Common myeloid progenitor, CD34-positive (primary cell): ENCODE measurements at regions of chr14 and their contacts with region 1.

Region 1: DNA sequence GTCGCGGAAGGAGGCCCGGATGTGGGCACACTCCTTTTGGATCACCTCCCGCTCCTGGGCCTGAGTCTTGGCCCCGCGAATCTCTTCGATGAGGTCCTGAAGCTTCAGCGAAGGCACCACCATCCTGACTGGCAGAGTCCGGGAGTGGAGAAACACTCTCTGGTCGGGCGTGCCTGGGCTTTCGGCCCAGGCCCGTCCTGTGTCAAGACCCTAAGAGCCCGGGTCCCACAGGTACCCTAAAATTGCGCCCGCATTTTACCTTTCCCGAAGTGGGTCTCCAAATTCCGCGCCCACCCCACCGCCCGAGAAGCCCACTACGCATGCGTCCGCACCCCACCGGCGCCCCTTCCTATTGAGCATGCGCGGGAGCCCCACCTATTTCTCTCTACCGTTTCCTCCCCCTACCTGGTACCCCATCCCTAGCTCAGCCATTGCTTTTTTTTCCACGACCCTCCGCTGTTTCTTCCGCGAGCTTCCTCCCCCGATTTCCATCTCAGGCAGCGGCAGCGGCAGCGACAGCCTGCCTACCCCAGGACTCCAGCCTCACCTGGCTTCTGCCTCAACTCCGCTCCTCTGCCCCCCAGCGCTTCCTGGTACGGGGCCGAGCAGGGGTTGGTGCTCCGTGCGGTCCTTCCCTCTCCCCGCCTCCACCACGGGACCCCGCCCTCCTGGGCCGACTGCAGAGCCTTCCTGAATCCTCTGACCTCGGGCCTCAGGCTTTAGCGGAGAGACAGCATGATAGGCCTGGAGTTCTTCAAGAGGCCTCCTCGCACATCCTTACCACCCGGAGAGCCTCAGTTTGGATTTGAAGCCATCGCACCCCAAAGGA is at the start of gene AP1G2:
- DNase-seq: peak; percentile 81 to 86 (median 84)
- H3K4me3 ChIP-seq: peak within 1 kb of the TSS; percentile 76 to 94 (median 85)
- H3K27ac ChIP-seq: peak within 1 kb of the TSS; percentile 64 to 75
- H3K4me1 ChIP-seq: peaks cover 4 to 51% (median 45%) of the 10 kb centered on the region in 4 experiments
- H3K27me3 ChIP-seq: no peaks in the 10 kb centered on the region

Region 2: DNA sequence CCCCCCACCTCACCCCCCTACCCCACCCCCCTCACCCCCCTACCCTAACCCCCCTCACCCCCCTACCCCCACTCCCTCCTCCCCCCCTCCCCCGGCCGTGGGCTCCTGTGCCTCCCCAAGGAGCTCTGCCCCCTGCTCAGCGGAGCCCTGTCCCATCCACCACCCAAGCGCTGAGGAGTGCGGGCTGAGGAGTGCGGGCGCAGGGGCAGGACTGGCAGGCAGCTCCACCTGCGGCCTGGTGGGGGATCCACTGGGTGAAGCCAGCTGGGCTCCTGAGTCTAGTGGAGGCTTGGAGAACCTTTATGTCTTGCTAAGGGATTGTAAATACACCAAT is 13.5 kb after region 1 on chr14:
- CTCF ChIA-PET with region 1: interaction called, 20 read pairs
- POLR2A ChIA-PET with region 1: interaction called, 3 read pairs
- DNase-seq: peak in 1 of 3 donors; percentile 19
- H3K4me3 ChIP-seq: no peak overlapping the region
- H3K27ac ChIP-seq: no peak overlapping the region
- H3K4me1 ChIP-seq: peaks cover 0 to 24% (median 8%) of the 10 kb centered on the region in 4 experiments
- H3K27me3 ChIP-seq: peaks cover 2 to 45% (median 7%) of the 10 kb centered on the region in 5 experiments